ENCODE measurements at regions of chr1 and their contacts with region 1.

Region 1: GRCh38 chr1:78676347-78676982 is 26.8 kb downstream of the IFI44 start:
- DNase-seq: peak; percentile 61 to 87
- H3K4me3 ChIP-seq: no peak overlapping the region
- H3K27ac ChIP-seq: no peak overlapping the region
- H3K4me1 ChIP-seq: peaks cover 0 to 3% (median 0%) of the 10 kb centered on the region in 4 donors
- H3K27me3 ChIP-seq: no peaks in the 10 kb centered on the region
- CTCF ChIP-seq: peak in 5 of 7 experiments; percentile 9 to 94 (median 71)
- EP300 ChIP-seq: no peak
- POLR2A ChIP-seq: no peak

Region 2: DNA sequence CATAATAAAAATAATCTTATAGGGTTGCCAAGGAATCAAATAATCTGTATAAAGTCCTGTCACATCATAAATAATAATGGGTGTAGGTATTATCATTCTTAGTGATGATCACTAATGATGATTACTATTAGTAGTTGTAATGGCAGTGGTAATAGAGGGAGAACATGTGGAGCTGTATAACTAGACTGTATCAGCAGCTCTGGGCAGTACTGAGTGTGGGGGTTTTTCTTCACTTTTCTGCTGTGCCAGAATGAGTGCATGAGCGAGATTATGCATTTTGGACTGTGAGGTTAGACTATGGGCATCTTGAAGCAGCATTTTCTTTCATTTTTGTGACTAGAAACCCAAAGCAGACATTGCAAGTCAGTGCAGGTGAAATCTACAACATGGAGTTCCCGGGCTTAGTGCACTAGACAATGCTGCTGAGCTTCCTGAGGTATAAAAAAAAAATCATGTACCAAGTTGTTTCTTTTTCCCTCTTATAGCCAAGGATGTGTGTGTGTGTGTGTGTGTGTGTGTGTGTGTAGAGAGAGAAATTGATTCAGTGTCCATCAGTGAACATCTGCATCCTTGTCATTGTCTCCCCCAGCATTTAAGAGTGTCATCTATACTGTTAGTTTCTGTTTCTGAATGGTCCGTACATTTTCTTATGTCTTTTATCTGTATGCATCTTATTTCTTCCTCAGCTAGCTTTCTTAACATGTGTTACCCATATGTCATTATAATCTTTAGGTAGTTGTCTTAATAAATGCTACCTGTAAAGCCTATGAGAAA is 544.1 kb before region 1 on chr1:
- intact Hi-C with region 1: loop called (anchors 10 kb)
- DNase-seq: no peak
- H3K4me3 ChIP-seq: no peak overlapping the region
- H3K27ac ChIP-seq: no peak overlapping the region
- H3K4me1 ChIP-seq: no peaks in the 10 kb centered on the region
- H3K27me3 ChIP-seq: no peaks in the 10 kb centered on the region
- CTCF ChIP-seq: no peak
- EP300 ChIP-seq: no peak
- POLR2A ChIP-seq: no peak

Region 3: GRCh38 chr1:78617615-78618026 is 58.8 kb before region 1 on chr1:
- intact Hi-C with region 1: loop called (anchors 10 kb)
- DNase-seq: peak; percentile 62 to 93
- H3K4me3 ChIP-seq: no peak overlapping the region
- H3K27ac ChIP-seq: peak overlapping the region in 2 of 5 donors; percentile 40 to 43
- H3K4me1 ChIP-seq: peaks cover 8 to 42% (median 34%) of the 10 kb centered on the region in 4 donors
- H3K27me3 ChIP-seq: no peaks in the 10 kb centered on the region
- CTCF ChIP-seq: peak in 5 of 7 experiments; percentile 71 to 89 (median 77)
- EP300 ChIP-seq: no peak
- POLR2A ChIP-seq: no peak